Sciatic nerve (tissue), 2 donors: ENCODE measurements at regions of chr3 and their contacts with region 1.

Region 1: GRCh38 chr3:6367171-6367570 is 493.7 kb upstream of the GRM7 start:
- DNase-seq: no peak
- ATAC-seq: no peak

Region 2: DNA sequence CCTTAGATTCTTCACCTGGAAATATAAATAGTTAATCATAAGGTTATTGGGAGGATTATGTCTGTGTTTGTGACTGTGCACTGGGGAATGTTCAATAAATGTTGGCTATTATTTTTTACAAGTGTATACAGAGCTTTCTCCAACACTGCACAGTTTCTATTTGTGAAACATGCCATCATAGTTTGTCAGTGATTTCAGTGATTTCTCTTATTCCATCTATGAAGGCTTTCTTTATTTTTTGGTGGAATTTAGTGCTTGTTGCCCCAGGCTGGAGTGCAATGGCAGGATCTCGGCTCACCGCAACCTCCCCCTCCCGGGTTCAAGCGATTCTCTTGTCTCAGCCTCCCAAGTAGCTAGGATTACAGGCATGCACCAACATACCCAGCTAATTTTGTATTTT is 51.3 kb before region 1 on chr3:
- intact Hi-C with region 1: loop called (anchors 2 kb)
- DNase-seq: no peak
- ATAC-seq: no peak

Region 3: DNA sequence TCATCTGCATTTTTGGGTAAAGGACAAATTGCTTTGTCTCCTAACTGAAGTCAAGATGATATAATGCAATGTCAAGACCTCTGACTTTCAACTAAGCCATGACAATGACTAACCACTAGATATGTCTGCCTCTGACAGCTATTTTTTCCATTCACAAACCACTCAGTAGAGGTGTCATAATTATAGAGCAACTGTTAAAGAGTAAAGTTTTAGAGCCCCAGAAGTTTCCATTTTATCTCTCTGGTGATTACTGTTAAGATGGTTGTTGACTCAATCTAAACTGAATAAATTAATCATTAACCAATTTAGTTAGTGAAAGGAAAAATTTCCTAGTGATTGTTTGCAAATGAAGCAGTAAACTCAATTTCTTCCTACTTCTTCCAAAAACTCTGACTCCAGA is 1273.6 kb after region 1 on chr3:
- intact Hi-C with region 1: loop called (anchors 10 kb)
- DNase-seq: no peak
- ATAC-seq: no peak